Activated CD4-positive, alpha-beta T cell treated with anti-CD3 and anti-CD28 coated beads, Interleukin-2, amount 10 ng/mL, durations not matched to agents 7 days and 5 days (primary cell): ENCODE measurements at regions of chr16 and their contacts with region 1.

Region 1: GRCh38 chr16:3023669-3024478 is at the starts of genes HCFC1R1 and THOC6:
- DNase-seq: peak; percentile 97
- H3K4me3 Mint-ChIP-seq: peak within 1 kb of the TSS; percentile 84
- H3K27ac Mint-ChIP-seq: peak within 1 kb of the TSS; percentile 95
- H3K4me1 Mint-ChIP-seq: peaks cover 56% of the 10 kb centered on the region
- H3K27me3 Mint-ChIP-seq: peaks cover 4% of the 10 kb centered on the region
- total RNA-seq, gene HCFC1R1: 38.3 to 44.1 TPM
- total RNA-seq, gene THOC6: 49.5 to 58.4 TPM

Region 2: GRCh38 chr16:2938206-2938605 is 85.7 kb before region 1 on chr16:
- CTCF ChIA-PET with region 1: no interaction called
- POLR2A ChIA-PET with region 1: no interaction called
- DNase-seq: no peak
- H3K4me3 Mint-ChIP-seq: no peak overlapping the region
- H3K27ac Mint-ChIP-seq: no peak overlapping the region
- H3K4me1 Mint-ChIP-seq: peaks cover 7% of the 10 kb centered on the region
- H3K27me3 Mint-ChIP-seq: no peaks in the 10 kb centered on the region

Region 3: GRCh38 chr16:2980227-2981086 is 43.4 kb before region 1 on chr16 and contains the start of gene PKMYT1:
- CTCF ChIA-PET with region 1: interaction called, 16 read pairs
- POLR2A ChIA-PET with region 1: no interaction called
- DNase-seq: peak; percentile 93
- H3K4me3 Mint-ChIP-seq: peak within 1 kb of the TSS; percentile 89
- H3K27ac Mint-ChIP-seq: peak within 1 kb of the TSS; percentile 92
- H3K4me1 Mint-ChIP-seq: peaks cover 44% of the 10 kb centered on the region
- H3K27me3 Mint-ChIP-seq: no peaks in the 10 kb centered on the region
- total RNA-seq, gene PKMYT1: 122 to 151 TPM

Region 4: DNA sequence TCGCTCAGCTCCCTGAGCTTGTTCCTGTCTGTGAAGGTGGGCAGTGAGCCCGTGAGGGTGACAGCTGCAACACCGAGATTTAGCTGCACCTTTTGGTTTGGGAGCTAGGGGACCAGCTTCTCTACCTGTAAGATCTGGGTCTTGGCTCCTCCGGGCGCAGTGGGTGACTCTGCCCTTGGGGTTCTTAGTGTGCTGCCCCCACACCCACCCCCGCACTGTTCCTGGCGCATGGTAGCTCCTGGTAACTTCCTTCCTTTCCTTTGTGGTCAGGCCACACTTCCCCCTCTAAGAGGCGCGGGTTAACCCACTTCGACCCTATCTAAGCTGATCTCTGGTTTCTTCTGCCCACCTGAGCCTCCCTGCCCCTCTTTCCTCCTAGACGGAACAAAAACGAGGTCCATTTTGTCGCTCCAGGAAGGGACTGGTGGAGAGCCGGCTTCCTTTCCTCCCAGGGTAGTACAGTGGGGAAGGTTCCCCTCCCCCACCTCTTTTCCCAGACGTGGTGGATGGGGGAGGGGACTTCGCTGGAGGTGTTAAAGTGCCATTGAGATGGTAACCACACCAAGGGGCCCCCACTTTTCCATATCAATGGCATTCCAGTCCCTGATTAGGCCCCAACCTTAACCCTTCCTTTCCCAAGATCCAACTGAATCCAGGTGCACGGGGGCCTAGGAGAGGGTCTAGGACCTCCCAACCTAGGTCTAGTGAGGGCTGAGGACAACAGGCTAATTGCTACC is 15.7 kb before region 1 on chr16:
- CTCF ChIA-PET with region 1: interaction called, 15 read pairs
- POLR2A ChIA-PET with region 1: no interaction called
- DNase-seq: no peak
- H3K4me3 Mint-ChIP-seq: peak overlapping the region; percentile 20
- H3K27ac Mint-ChIP-seq: no peak overlapping the region
- H3K4me1 Mint-ChIP-seq: peaks cover 32% of the 10 kb centered on the region
- H3K27me3 Mint-ChIP-seq: peaks cover 32% of the 10 kb centered on the region

Region 5: GRCh38 chr16:3045357-3045728 is 21.5 kb after region 1 on chr16:
- CTCF ChIA-PET with region 1: interaction called, 119 read pairs
- POLR2A ChIA-PET with region 1: no interaction called
- DNase-seq: peak; percentile 57
- H3K4me3 Mint-ChIP-seq: peak overlapping the region; percentile 76
- H3K27ac Mint-ChIP-seq: peak overlapping the region; percentile 81
- H3K4me1 Mint-ChIP-seq: peaks cover 31% of the 10 kb centered on the region
- H3K27me3 Mint-ChIP-seq: peaks cover 50% of the 10 kb centered on the region